Esophagus muscularis mucosa (tissue), 4 donors: ENCODE measurements at regions of chr2 and their contacts with region 1.

Region 1: DNA sequence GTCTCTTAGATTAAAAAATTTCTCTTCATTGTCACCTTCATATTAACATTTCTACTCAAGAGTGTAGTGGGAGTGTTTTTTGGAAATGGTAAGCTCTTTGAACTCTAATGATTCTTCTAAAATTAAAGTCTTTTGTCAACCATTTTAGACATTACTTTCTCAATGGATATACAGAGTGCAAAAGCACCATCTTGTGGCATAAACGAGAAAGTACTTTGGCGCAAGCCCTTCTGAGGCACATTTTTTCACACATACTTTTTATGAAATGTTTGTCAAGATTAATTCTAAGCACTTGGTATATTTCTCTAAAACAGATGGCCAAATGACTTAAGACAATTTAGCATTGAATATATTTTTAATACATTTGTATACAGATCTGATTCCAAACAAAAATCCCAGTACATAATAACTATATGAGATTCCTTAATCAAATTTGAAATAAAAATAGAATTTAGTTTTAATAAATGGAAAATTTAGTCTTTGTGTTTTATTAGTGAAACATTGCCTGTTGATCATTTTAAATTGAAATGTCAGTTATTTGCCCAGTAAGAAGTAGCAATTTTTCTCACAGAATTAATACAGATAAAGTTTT is 63.3 kb upstream of the GALNT5 start:
- DNase-seq: no peak
- H3K4me3 ChIP-seq: no peak overlapping the region
- H3K27ac ChIP-seq: no peak overlapping the region
- H3K4me1 ChIP-seq: peaks cover 0 to 10% (median 7%) of the 10 kb centered on the region in 4 donors
- H3K27me3 ChIP-seq: no peaks in the 10 kb centered on the region
- CTCF ChIP-seq: peak; percentile 70 to 82 (median 77)
- EP300 ChIP-seq: no peak
- POLR2A ChIP-seq: no peak

Region 2: DNA sequence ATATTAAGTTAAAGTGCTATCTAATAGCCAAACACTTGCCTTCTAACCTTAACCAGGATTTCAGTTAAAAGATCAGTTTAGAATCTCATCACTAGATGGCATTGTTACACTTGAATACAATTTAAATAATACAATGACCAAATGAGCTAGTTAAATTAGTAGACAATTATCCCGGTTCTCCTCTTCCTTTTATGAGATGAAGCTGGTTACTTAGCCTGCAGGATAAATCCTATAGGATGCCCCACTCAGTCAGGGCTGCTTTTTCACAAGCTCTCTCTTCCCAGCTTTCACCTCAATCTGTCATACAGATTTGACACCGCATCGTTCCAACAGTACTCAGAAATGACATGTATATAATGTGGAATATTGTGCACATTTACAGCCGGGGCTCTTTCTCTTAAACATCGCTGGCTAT is 1816.9 kb before region 1 on chr2:
- intact Hi-C with region 1: loop called (anchors 10 kb)
- DNase-seq: no peak
- H3K4me3 ChIP-seq: no peak overlapping the region
- H3K27ac ChIP-seq: no peak overlapping the region
- H3K4me1 ChIP-seq: no peaks in the 10 kb centered on the region
- H3K27me3 ChIP-seq: no peaks in the 10 kb centered on the region
- CTCF ChIP-seq: peak in 1 of 3 experiments; percentile 35
- EP300 ChIP-seq: no peak
- POLR2A ChIP-seq: no peak

Region 3: GRCh38 chr2:156565066-156565710 is 629.0 kb before region 1 on chr2:
- intact Hi-C with region 1: no loop called
- DNase-seq: no peak
- H3K4me3 ChIP-seq: no peak overlapping the region
- H3K27ac ChIP-seq: no peak overlapping the region
- H3K4me1 ChIP-seq: no peaks in the 10 kb centered on the region
- H3K27me3 ChIP-seq: no peaks in the 10 kb centered on the region
- CTCF ChIP-seq: no peak
- EP300 ChIP-seq: no peak
- POLR2A ChIP-seq: no peak

Region 4: GRCh38 chr2:156756516-156756915 is 437.7 kb before region 1 on chr2:
- intact Hi-C with region 1: no loop called
- DNase-seq: no peak
- H3K4me3 ChIP-seq: no peak overlapping the region
- H3K27ac ChIP-seq: no peak overlapping the region
- H3K4me1 ChIP-seq: no peaks in the 10 kb centered on the region
- H3K27me3 ChIP-seq: no peaks in the 10 kb centered on the region
- CTCF ChIP-seq: no peak
- EP300 ChIP-seq: no peak
- POLR2A ChIP-seq: no peak

Region 5: GRCh38 chr2:156892467-156893281 is 301.5 kb before region 1 on chr2:
- intact Hi-C with region 1: loop called (anchors 10 kb)
- DNase-seq: no peak
- H3K4me3 ChIP-seq: peak overlapping the region; percentile 22 to 47 (median 38)
- H3K27ac ChIP-seq: no peak overlapping the region
- H3K4me1 ChIP-seq: peaks cover 5 to 14% (median 9%) of the 10 kb centered on the region in 4 donors
- H3K27me3 ChIP-seq: peaks cover 0 to 4% (median 0%) of the 10 kb centered on the region in 4 donors
- CTCF ChIP-seq: peak in 2 of 3 experiments; percentile 19 to 49
- EP300 ChIP-seq: no peak
- POLR2A ChIP-seq: no peak

Region 6: GRCh38 chr2:157032017-157032416 is 162.2 kb before region 1 on chr2:
- intact Hi-C with region 1: loop called (anchors 5 kb)
- DNase-seq: no peak
- H3K4me3 ChIP-seq: no peak overlapping the region
- H3K27ac ChIP-seq: peak overlapping the region in 3 of 4 donors; percentile 24 to 50 (median 36)
- H3K4me1 ChIP-seq: peaks cover 0 to 16% (median 10%) of the 10 kb centered on the region in 4 donors
- H3K27me3 ChIP-seq: no peaks in the 10 kb centered on the region
- CTCF ChIP-seq: no peak
- EP300 ChIP-seq: peak; percentile 35
- POLR2A ChIP-seq: no peak